ENCODE measurements at regions of chr1 and their contacts with region 1.

Region 1: GRCh38 chr1:244970661-244971551 is 106.6 kb upstream of the HNRNPU start:
- DNase-seq: peak; percentile 93
- ATAC-seq: peak; percentile 89 to 94

Region 2: GRCh38 chr1:244835276-244836134 is 135.4 kb before region 1 on chr1 and contains the start of gene COX20:
- intact Hi-C with region 1: loop called in 1 of 2 experiments (anchors 1 kb)
- DNase-seq: peak; percentile 94
- ATAC-seq: peak; percentile 89 to 91
- total RNA-seq, gene COX20: 61.2 to 73.1 TPM

Region 3: DNA sequence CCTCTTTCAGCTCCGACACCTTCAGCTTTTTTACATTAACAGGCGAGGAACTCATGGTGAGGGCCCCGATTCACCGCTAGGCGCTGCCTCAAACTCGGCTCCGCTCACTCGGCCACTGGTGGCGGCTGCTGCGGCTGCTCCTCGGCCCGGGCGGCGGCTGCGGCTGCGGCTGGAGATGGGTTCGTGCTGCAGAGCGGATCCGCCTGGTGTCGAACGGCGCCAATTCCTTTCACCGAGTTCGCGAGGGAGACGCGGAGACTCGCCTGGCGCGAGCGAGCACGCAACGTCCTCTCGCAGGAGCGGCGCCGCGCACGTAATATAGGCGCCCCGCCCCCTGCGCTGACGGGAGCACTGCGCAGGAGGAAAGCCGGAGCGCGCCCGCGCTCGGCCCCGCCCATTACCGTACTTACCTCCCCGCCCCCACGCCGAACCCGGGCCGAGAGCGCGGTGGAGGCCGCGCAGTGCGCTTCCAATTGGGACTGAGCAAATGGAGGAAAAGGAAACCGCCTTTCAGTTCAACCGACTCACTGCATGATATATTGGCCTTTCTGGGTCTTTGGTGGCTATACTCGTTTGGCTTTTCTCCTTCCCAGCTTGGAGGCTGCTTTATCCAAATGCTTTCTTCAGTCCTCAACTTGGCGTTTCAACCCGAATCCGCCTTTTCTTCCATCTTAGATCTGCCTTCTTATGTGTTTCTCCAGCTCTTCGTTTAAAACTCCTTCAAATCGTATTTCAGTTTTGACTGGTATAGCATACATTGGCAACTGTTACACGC is 106.5 kb before region 1 on chr1 and contains the start of gene HNRNPU:
- intact Hi-C with region 1: loop called (anchors 1 to 2 kb)
- DNase-seq: peak; percentile 98
- ATAC-seq: peak; percentile 90 to 92
- total RNA-seq, gene HNRNPU: 167 to 204 TPM

Region 4: DNA sequence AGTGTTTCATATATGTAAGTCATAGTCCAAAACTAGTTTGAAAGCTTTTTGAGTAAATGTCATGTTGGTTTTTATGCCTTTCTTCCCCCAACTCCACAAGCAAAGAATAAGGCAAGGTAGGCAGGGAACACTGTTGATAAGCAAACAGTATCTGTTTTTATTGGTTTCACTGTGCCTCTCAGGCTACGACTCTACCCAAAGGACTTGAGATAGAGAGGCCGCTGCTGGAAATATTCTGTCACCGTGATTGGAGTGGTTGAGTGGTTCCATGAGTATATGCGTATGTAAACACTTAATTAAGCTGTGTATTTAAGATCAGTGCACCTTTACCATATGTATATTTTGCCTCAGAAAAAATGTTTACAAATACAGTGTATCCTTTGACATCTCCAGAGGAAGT is 45.8 kb after region 1 on chr1:
- intact Hi-C with region 1: no loop called
- DNase-seq: no peak
- ATAC-seq: peak in 1 of 2 donors; percentile 21